GM12878 (cell line): ENCODE measurements at regions of chr1 and their contacts with region 1.

Region 1: DNA sequence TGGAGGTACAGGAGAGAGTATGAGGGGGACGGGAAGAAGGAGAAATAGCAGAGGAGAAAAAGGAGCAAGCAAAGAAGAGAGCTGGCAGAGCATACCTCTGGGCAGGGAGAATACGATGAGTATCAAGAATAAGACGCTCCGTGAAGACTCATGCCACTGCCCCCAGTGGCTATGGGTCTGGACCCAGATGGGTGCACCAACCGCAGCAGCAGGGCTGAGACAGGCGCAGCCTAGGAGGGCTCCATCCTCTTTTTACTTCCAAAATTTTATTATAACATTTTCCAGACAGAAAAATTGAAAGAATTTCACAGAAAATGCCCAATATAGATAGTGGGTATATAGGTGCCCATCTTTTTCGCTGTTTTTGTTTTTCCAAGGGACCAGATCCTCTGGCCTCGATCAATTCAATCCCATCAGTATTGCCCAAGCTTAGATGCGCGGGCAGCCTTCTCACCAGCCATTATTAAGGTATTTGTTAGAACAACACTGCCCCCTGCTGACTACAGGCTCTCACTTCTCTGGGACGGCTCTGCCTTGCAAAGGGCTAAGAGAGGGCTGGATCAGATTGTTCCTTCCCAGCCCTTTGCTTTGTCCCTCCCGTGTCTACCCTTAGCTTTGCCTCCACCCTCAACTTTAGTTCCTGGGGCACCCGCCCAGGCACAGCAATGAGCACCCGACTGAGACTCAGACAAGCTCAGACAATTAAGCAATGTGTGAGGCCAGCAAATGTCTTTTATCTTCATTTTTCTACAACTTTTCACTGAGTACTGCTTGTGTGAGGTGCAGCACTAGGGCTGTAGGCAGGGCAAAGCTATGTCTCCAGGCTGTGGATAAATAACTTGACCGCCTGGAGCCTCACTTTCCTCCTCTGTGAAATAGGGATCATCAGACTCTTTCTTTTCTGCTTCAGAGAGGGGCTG is 17.5 kb upstream of the CAMK1G start:
- DNase-seq: no peak
- ATAC-seq: peak; percentile 96
- H3K4me3 ChIP-seq: no peak overlapping the region
- H3K27ac ChIP-seq: no peak overlapping the region
- H3K4me1 ChIP-seq: no peaks in the 10 kb centered on the region
- H3K27me3 ChIP-seq: peaks cover 0 to 5% of the 10 kb centered on the region in 2 experiments; a peak in 3 of 4 replicates
- CTCF ChIP-seq: peak; percentile 76 to 87 (median 82)
- EP300 ChIP-seq: no peak
- POLR2A ChIP-seq: no peak
- RAD21 ChIP-seq: peak; percentile 68

Region 2: GRCh38 chr1:209207701-209208286 is 358.2 kb before region 1 on chr1:
- CTCF ChIA-PET with region 1: interaction called, 5 read pairs
- POLR2A ChIA-PET with region 1: no interaction called
- RAD21 ChIA-PET with region 1: no interaction called
- SMC1A ChIA-PET with region 1: no interaction called
- in situ Hi-C with region 1: no loop called
- intact Hi-C with region 1: loop called (anchors 2 kb)
- DNase-seq: no peak
- ATAC-seq: peak; percentile 81
- H3K4me3 ChIP-seq: no peak overlapping the region
- H3K27ac ChIP-seq: no peak overlapping the region
- H3K4me1 ChIP-seq: no peaks in the 10 kb centered on the region
- H3K27me3 ChIP-seq: peaks cover 4 to 6% of the 10 kb centered on the region in 2 experiments; a peak in 3 of 4 replicates
- CTCF ChIP-seq: peak; percentile 51 to 74 (median 61); a peak in 5 of 6 replicates
- EP300 ChIP-seq: no peak
- POLR2A ChIP-seq: no peak
- RAD21 ChIP-seq: peak; percentile 84

Region 3: DNA sequence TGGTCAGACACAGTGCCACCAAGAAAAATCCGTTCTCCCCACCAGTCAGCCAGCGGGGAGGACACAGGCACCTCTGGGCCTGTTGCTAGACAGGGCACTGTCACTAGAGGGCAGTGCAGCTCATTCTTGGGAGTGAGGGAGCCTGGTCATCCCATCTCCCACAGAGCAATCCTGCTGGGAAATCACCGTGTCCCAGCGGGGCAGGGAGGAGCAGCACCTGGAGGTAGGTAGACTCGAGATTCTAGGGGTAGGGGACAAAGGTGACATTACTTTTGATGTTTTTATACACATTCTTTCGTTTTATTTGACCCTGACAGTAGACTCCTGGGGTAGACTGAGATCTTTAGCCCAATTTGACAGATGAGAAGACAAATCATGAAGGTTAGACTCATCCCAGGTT is 10.8 kb after region 1 on chr1:
- CTCF ChIA-PET with region 1: interaction called, 13 read pairs
- POLR2A ChIA-PET with region 1: no interaction called
- RAD21 ChIA-PET with region 1: no interaction called
- SMC1A ChIA-PET with region 1: interaction called, 5 read pairs
- in situ Hi-C with region 1: no loop called
- intact Hi-C with region 1: no loop called
- DNase-seq: peak; percentile 12
- ATAC-seq: peak; percentile 99
- H3K4me3 ChIP-seq: no peak overlapping the region
- H3K27ac ChIP-seq: no peak overlapping the region
- H3K4me1 ChIP-seq: no peaks in the 10 kb centered on the region
- H3K27me3 ChIP-seq: peaks cover under 1 to 1% of the 10 kb centered on the region in 2 experiments; a peak in 3 of 4 replicates
- CTCF ChIP-seq: peak; percentile 93 to 96 (median 94)
- EP300 ChIP-seq: no peak
- POLR2A ChIP-seq: no peak
- RAD21 ChIP-seq: peak; percentile 86

Region 4: GRCh38 chr1:209607102-209607794 is 41.2 kb after region 1 on chr1:
- CTCF ChIA-PET with region 1: interaction called, 23 read pairs
- POLR2A ChIA-PET with region 1: no interaction called
- RAD21 ChIA-PET with region 1: no interaction called
- SMC1A ChIA-PET with region 1: interaction called, 9 read pairs
- in situ Hi-C with region 1: no loop called
- intact Hi-C with region 1: no loop called
- DNase-seq: peak; percentile 48
- ATAC-seq: peak; percentile 93
- H3K4me3 ChIP-seq: no peak overlapping the region
- H3K27ac ChIP-seq: peak overlapping the region; percentile 45; the same call in 1 of the 2 replicates
- H3K4me1 ChIP-seq: peaks cover 10% of the 10 kb centered on the region
- H3K27me3 ChIP-seq: no peaks in the 10 kb centered on the region
- CTCF ChIP-seq: no peak
- EP300 ChIP-seq: no peak
- POLR2A ChIP-seq: no peak
- RAD21 ChIP-seq: no peak

Region 5: GRCh38 chr1:209643285-209644020 is 77.4 kb after region 1 on chr1:
- CTCF ChIA-PET with region 1: interaction called, 11 read pairs
- POLR2A ChIA-PET with region 1: no interaction called
- RAD21 ChIA-PET with region 1: no interaction called
- SMC1A ChIA-PET with region 1: interaction called, 5 read pairs
- in situ Hi-C with region 1: no loop called
- intact Hi-C with region 1: no loop called
- DNase-seq: no peak
- ATAC-seq: no peak
- H3K4me3 ChIP-seq: no peak overlapping the region
- H3K27ac ChIP-seq: no peak overlapping the region
- H3K4me1 ChIP-seq: no peaks in the 10 kb centered on the region
- H3K27me3 ChIP-seq: no peaks in the 10 kb centered on the region; a peak in 1 of 4 replicates
- CTCF ChIP-seq: no peak
- EP300 ChIP-seq: no peak
- POLR2A ChIP-seq: no peak
- RAD21 ChIP-seq: no peak

Region 6: DNA sequence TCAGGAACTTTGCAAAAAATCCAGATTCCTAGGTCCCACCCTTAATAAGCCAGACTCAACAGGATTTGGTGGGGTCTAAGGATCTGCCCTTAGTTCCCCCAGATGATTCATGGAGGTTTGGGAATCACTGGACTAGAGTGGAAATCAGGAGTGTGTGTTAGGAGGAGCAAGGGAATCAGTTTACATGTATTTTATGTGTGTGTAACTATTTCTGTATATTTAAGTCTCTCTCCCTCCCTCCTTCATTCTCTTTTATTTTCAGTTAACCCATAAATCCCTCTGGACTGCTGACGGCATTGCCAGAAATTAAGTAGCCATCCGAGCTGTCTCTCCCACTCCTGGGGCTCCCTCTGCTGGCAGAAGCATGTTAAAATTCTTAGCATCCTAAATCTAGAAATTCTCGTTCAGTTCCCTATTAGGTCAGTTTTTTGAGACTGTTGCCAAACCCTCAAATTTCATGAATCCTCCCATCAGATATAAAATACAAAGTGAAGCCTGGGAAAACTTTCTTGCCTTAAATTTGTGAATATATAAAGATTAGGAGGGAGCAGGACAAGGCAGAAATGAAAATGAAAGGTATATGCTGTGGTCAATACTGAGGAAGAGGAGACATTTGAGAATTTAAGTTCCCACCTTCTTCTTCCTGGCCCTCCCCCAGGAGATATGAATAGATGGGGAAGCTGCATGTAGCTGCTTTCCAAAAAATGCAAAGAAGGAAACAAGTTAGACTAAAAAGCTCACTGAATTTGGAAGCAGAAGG is 126.9 kb after region 1 on chr1:
- CTCF ChIA-PET with region 1: interaction called, 307 read pairs
- POLR2A ChIA-PET with region 1: no interaction called
- RAD21 ChIA-PET with region 1: interaction called, 5 read pairs
- SMC1A ChIA-PET with region 1: interaction called, 46 read pairs
- in situ Hi-C with region 1: no loop called
- intact Hi-C with region 1: loop called (anchors 1 kb)
- DNase-seq: peak; percentile 34
- ATAC-seq: peak; percentile 89
- H3K4me3 ChIP-seq: no peak overlapping the region
- H3K27ac ChIP-seq: no peak overlapping the region
- H3K4me1 ChIP-seq: no peaks in the 10 kb centered on the region
- H3K27me3 ChIP-seq: no peaks in the 10 kb centered on the region
- CTCF ChIP-seq: peak; percentile 80 to 92 (median 83)
- EP300 ChIP-seq: 0 out of 4 replicates have a peak, but pooled peaks of 1 of the 2 experiments have one; percentile 31
- POLR2A ChIP-seq: no peak
- RAD21 ChIP-seq: peak; percentile 97

Region 7: DNA sequence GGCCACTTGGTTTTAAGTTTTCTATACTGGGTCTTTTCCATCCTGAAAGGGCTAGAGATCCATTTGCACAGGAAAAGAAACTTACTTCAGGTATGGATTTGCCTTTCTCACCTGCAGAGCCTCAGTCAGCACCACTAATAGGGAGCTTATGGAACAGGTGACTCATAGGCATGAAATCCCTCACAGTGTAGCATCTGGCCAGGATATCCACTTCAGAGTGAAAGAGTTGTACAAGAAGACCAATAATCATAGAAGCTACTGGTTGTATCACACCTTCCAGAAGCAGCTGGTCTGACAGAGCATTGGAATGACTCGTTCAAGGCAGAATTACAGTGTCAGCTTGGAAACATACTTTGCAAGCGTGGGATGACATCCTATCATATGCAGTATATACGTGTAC is 345.7 kb after region 1 on chr1:
- CTCF ChIA-PET with region 1: no interaction called
- POLR2A ChIA-PET with region 1: no interaction called
- RAD21 ChIA-PET with region 1: no interaction called
- SMC1A ChIA-PET with region 1: no interaction called
- in situ Hi-C with region 1: no loop called
- intact Hi-C with region 1: no loop called
- DNase-seq: no peak
- ATAC-seq: no peak
- H3K4me3 ChIP-seq: no peak overlapping the region
- H3K27ac ChIP-seq: no peak overlapping the region
- H3K4me1 ChIP-seq: no peaks in the 10 kb centered on the region
- H3K27me3 ChIP-seq: no peaks in the 10 kb centered on the region
- CTCF ChIP-seq: no peak
- EP300 ChIP-seq: no peak
- POLR2A ChIP-seq: no peak
- RAD21 ChIP-seq: no peak